Natural killer cell (primary cell): ENCODE measurements at regions of chr20 and their contacts with region 1.

Region 1: GRCh38 chr20:47886460-47887041 is 101.3 kb upstream of the SULF2 start:
- DNase-seq: no peak
- ATAC-seq: no peak
- H3K4me3 ChIP-seq: no peak overlapping the region
- H3K4me3 Mint-ChIP-seq: no peak overlapping the region
- H3K27ac ChIP-seq: no peak overlapping the region
- H3K27ac Mint-ChIP-seq: no peak overlapping the region
- H3K4me1 ChIP-seq: no peaks in the 10 kb centered on the region
- H3K4me1 Mint-ChIP-seq: no peaks in the 10 kb centered on the region
- H3K27me3 ChIP-seq: no peaks in the 10 kb centered on the region
- H3K27me3 Mint-ChIP-seq: no peaks in the 10 kb centered on the region
- CTCF ChIP-seq: no peak

Region 2: GRCh38 chr20:47809913-47810622 is 76.5 kb before region 1 on chr20:
- intact Hi-C with region 1: loop called (anchors 10 kb)
- DNase-seq: no peak
- ATAC-seq: no peak
- H3K4me3 ChIP-seq: no peak overlapping the region
- H3K4me3 Mint-ChIP-seq: no peak overlapping the region
- H3K27ac ChIP-seq: no peak overlapping the region
- H3K27ac Mint-ChIP-seq: no peak overlapping the region
- H3K4me1 ChIP-seq: no peaks in the 10 kb centered on the region
- H3K4me1 Mint-ChIP-seq: no peaks in the 10 kb centered on the region
- H3K27me3 ChIP-seq: no peaks in the 10 kb centered on the region
- H3K27me3 Mint-ChIP-seq: peaks cover 25 to 42% of the 10 kb centered on the region in 2 donors
- CTCF ChIP-seq: no peak

Region 3: DNA sequence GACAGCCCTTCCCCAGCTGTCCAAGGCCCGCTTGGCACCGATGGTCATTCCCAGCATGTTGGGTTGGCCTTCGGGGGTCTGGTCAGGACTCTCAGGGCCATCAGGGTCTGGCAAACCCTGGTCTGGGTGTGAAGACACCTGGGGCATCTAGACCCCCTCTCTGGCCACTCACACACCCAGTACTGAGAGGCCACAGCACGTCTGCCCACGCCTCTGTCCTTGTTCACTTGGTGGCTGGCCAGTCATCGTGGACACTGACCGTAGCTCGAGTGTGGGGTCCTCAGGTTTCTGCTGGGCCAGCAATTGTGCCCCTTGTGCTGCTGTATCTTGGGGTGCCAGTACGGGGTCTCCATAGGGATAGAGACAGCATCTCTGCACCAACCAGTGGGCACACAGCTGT is 47.4 kb before region 1 on chr20:
- intact Hi-C with region 1: loop called (anchors 5 kb)
- DNase-seq: no peak
- ATAC-seq: no peak
- H3K4me3 ChIP-seq: no peak overlapping the region
- H3K4me3 Mint-ChIP-seq: no peak overlapping the region
- H3K27ac ChIP-seq: no peak overlapping the region
- H3K27ac Mint-ChIP-seq: no peak overlapping the region
- H3K4me1 ChIP-seq: no peaks in the 10 kb centered on the region
- H3K4me1 Mint-ChIP-seq: no peaks in the 10 kb centered on the region
- H3K27me3 ChIP-seq: no peaks in the 10 kb centered on the region
- H3K27me3 Mint-ChIP-seq: no peaks in the 10 kb centered on the region
- CTCF ChIP-seq: no peak